ENCODE measurements at regions of chr2 and their contacts with region 1.

Region 1: DNA sequence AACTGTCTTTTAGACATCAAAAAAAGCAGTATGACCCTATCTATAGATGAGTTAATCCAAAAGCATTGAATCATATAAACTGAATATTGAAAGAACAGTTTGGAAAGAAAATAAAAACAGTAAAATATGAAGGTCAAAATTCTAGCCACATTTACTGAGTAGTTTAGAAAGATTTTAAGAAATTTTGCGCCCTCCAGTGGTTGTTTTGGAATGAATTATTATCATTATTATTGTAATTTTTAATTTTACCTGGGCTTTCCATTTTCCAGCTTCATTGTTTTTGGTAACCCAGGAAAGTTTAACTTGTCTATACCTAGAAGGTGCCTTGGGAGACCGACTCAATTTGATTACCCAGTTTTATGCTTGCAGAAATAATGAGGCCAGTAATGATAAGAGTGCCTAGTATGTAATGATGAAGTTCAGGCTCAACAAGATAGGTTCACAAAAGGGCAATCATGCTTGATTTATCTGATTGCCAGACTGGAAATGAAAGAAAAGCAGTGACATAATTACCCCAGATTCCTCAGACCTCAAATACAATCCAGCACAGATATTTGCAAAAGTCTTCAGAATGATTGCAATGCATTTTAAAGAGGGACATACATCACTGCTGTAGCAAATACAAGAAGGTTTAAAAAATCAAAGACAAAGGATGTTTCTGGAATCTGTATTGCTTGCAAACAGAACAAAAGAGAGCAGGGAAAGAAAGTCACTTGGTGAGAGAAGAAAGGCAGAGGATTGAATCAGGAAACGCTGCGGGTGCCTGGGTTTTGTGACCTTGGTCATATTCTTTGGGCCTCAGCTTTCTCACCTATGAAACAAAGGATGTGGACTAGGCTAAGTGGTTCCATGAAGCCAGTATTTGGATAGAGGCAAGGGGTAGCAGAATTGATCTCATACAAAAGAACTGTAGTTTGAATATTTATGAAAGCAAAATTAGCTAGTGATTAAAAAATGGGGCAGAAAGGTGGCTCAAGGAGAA is 153.8 kb downstream of the MAP2 start:
- H3K4me3 Mint-ChIP-seq: no peak overlapping the region
- H3K27ac Mint-ChIP-seq: no peak overlapping the region
- H3K4me1 Mint-ChIP-seq: peaks cover 5% of the 10 kb centered on the region
- H3K27me3 Mint-ChIP-seq: peaks cover 2% of the 10 kb centered on the region

Region 2: GRCh38 chr2:208392300-208393080 is 1185.2 kb before region 1 on chr2:
- intact Hi-C with region 1: loop called (anchors 10 kb)
- H3K4me3 Mint-ChIP-seq: no peak overlapping the region
- H3K27ac Mint-ChIP-seq: no peak overlapping the region
- H3K4me1 Mint-ChIP-seq: no peaks in the 10 kb centered on the region
- H3K27me3 Mint-ChIP-seq: no peaks in the 10 kb centered on the region

Region 3: GRCh38 chr2:209423562-209424198 is 154.0 kb before region 1 on chr2 and contains the start of gene MAP2:
- intact Hi-C with region 1: loop called (anchors 5 kb)
- H3K4me3 Mint-ChIP-seq: peak within 1 kb of the TSS; percentile 60
- H3K27ac Mint-ChIP-seq: no peak within 1 kb of the TSS
- H3K4me1 Mint-ChIP-seq: peaks cover 9% of the 10 kb centered on the region
- H3K27me3 Mint-ChIP-seq: peaks cover 45% of the 10 kb centered on the region

Region 4: DNA sequence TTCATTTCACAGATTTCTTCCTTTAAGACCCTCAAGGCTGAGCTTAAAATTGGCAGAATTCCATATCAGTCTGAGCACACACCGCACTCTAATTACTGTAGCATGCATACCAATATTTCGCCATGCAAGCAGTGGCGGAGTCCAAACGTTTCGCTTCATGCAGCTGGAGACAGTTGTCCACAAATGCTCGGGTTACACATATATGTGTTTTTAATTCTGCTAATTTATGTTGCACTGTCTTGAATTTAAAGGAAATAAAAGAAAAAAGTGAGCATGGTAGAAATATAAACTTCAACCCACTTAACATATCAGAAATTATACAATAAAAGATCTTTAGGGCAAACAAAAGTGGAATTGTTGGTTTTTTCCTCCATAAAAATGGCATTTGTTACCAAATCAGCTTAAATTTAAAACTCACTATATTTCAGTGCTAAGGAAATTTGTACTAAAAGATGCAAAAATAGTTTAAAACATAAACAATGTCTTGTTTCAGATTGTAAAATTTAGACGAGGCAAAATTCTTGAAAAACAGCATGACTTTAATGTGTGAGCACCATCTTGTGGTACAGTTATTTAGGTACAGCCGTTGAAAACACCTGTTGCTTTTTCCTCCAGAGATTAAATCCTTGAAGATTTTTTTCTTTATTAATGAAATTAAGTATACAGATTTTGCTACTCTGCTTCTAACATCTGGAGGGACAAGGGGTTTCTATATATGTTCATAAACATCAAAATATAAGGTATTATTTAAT is 617.6 kb after region 1 on chr2:
- intact Hi-C with region 1: loop called (anchors 10 kb)
- H3K4me3 Mint-ChIP-seq: no peak overlapping the region
- H3K27ac Mint-ChIP-seq: no peak overlapping the region
- H3K4me1 Mint-ChIP-seq: no peaks in the 10 kb centered on the region
- H3K27me3 Mint-ChIP-seq: no peaks in the 10 kb centered on the region

Measured in dendritic cell treated with granulocyte-macrophage colony-stimulating factor and Interleukin-4, amounts not matched to agents 40 ng/mL and 50 ng/mL, for 4 days (primary cell).